ENCODE measurements at regions of chr22 and their contacts with region 1.

Region 1: DNA sequence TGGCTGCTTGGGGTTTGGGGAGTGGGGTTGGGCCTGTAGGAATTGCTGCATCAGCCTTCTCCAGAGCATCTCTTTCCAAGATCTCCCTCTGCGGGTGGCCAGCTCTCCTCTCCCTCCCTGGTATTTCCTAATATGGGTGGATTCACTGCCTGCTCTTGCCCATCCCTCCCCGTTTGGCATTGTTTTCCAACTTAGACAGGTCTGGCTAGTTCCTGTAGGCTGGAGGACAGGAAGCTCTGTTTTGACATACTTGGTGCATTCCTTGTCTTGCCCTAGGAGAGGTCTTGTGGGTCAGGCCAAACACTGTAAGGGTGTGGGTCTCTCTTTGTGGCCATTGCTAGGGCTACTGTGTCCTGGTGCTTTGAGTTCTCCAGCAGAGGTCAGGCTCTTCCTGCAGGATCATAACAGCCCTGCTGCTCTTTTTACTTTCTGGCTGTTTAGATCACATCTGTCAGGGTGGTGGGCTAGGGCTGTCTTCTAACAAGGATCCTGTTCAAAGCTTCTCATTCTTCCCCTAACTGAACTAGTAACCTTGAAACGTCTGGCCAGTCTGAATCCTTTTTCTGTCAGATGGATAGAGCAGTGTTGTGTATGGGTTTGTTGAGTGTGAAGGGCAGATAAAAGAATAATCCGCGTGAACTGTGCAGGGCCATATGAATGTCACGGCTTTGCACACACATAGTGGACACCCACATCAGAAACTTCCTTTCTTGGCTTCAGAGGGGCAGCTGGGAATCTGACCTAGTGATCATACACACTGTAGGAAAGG is 18.3 kb upstream of the MICALL1 start:
- DNase-seq: peak; percentile 88
- H3K4me3 ChIP-seq: no peak overlapping the region
- H3K27ac ChIP-seq: peak overlapping the region; percentile 36
- H3K4me1 ChIP-seq: peaks cover 18% of the 10 kb centered on the region
- H3K27me3 ChIP-seq: no peaks in the 10 kb centered on the region
- CTCF ChIP-seq: peak; percentile 55 to 75

Region 2: DNA sequence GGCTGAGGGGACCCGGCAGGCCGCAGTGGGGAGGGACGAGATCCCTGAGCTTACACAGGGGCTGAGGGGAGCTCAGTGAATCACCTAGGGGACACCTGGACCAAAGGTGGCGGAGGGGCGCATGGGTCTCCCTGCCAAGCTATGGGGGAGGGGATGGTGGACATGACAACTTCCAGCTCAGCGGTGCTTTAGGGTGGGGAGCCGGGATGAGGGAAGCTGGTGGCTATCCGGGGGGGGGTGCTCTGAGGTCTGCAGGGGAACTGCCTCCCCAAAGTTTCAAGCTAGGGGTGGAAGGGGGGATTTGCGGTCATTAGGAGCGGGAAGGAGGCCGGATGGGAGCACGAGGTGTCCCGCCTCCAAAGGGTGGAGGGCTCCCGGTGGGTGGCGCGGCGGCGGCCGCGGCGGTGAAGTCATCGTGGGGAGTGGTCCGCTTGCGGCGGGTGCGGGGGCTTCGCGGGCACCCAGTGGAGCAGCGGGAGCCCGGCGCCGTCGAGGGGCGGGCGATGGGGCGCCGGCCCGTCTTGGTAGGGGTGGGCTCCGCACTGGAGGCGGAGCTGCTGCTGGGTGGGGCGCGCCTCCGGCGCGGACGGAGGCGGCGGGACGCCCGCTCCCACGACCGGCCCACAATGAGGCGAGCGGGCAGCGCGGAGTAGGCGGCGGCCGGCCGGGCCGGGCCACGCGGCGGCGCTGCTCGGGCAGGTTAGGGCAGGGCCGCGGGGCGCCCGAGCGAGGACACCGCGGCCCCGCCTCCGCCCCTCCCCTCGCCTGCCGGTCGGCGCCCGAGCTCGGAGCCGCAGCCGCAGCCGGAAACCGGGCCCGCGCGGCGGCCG is 18.0 kb after region 1 on chr22 and contains the start of gene MICALL1:
- CTCF ChIA-PET with region 1: interaction called, 3 read pairs
- dilution Hi-C with region 1: no loop called
- in situ Hi-C with region 1: no loop called
- intact Hi-C with region 1: loop called (anchors 1 kb)
- DNase-seq: peak; percentile 87
- H3K4me3 ChIP-seq: peak within 1 kb of the TSS; percentile 72 to 93 (median 87)
- H3K27ac ChIP-seq: peak within 1 kb of the TSS; percentile 95
- H3K4me1 ChIP-seq: peaks cover 48% of the 10 kb centered on the region
- H3K27me3 ChIP-seq: no peaks in the 10 kb centered on the region
- CTCF ChIP-seq: no peak
- total RNA-seq, gene MICALL1: 247 to 249 TPM

Region 3: DNA sequence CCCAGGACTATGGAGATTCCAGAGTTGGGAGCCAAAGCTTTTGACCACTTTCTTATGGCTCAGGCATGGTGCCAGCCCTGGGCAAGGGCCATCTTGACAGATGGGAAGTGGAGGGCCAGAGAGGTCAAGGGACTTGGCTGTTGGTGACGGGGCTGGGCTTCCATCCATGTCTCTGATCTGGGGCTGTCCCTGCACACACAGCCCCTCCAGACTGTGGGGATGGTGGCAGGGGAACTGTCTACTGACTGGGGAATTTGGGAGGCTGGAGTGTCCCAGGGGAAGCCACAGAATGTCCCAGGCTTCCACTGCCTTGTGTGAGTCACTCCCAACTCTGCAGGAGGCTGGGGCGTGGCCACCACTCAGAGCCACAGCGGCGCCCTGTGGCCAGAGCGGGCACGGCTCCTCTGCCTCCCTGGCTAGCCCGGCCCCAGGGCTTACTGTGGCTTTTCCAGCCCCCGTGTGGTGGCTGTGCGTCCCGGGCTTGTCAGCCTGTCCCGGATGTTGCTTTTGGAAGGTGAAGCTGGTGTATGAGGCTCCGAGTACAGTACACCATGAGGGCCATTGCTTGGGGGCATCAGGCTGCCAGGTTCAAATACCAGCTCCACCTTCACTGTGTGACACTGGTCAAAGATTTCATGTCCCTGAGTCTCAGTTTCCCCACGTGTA is 46.0 kb after region 1 on chr22:
- CTCF ChIA-PET with region 1: no interaction called
- dilution Hi-C with region 1: loop called (anchors 5 kb)
- in situ Hi-C with region 1: loop called in 1 of 2 experiments (anchors 5 kb)
- intact Hi-C with region 1: loop called (anchors 1 kb)
- DNase-seq: peak; percentile 90
- H3K4me3 ChIP-seq: no peak overlapping the region
- H3K27ac ChIP-seq: no peak overlapping the region
- H3K4me1 ChIP-seq: peaks cover 24% of the 10 kb centered on the region
- H3K27me3 ChIP-seq: no peaks in the 10 kb centered on the region
- CTCF ChIP-seq: peak; percentile 91 to 99

Region 4: GRCh38 chr22:37953437-37954179 is 65.8 kb after region 1 on chr22 and contains the starts of genes C22orf23 and POLR2F:
- CTCF ChIA-PET with region 1: no interaction called
- dilution Hi-C with region 1: no loop called
- in situ Hi-C with region 1: no loop called
- intact Hi-C with region 1: loop called (anchors 5 kb)
- DNase-seq: peak; percentile 89
- H3K4me3 ChIP-seq: peak within 1 kb of the TSS; percentile 67 to 83 (median 71)
- H3K27ac ChIP-seq: peak within 1 kb of the TSS; percentile 57
- H3K4me1 ChIP-seq: peaks cover 21% of the 10 kb centered on the region
- H3K27me3 ChIP-seq: no peaks in the 10 kb centered on the region
- CTCF ChIP-seq: no peak
- total RNA-seq, gene C22orf23: not detected
- total RNA-seq, gene POLR2F: 20.7 to 89.6 TPM

Region 5: GRCh38 chr22:37965940-37966664 is 78.3 kb after region 1 on chr22:
- CTCF ChIA-PET with region 1: no interaction called
- dilution Hi-C with region 1: no loop called
- in situ Hi-C with region 1: loop called in 1 of 2 experiments (anchors 10 kb)
- intact Hi-C with region 1: loop called (anchors 1 kb)
- DNase-seq: peak; percentile 17
- H3K4me3 ChIP-seq: no peak overlapping the region
- H3K27ac ChIP-seq: no peak overlapping the region
- H3K4me1 ChIP-seq: peaks cover 11% of the 10 kb centered on the region
- H3K27me3 ChIP-seq: no peaks in the 10 kb centered on the region
- CTCF ChIP-seq: no peak

Measured in mammary epithelial cell (primary cell).